Left ventricle myocardium inferior (tissue), 1 donor: ENCODE measurements at regions of chr16 and their contacts with region 1.

Region 1: DNA sequence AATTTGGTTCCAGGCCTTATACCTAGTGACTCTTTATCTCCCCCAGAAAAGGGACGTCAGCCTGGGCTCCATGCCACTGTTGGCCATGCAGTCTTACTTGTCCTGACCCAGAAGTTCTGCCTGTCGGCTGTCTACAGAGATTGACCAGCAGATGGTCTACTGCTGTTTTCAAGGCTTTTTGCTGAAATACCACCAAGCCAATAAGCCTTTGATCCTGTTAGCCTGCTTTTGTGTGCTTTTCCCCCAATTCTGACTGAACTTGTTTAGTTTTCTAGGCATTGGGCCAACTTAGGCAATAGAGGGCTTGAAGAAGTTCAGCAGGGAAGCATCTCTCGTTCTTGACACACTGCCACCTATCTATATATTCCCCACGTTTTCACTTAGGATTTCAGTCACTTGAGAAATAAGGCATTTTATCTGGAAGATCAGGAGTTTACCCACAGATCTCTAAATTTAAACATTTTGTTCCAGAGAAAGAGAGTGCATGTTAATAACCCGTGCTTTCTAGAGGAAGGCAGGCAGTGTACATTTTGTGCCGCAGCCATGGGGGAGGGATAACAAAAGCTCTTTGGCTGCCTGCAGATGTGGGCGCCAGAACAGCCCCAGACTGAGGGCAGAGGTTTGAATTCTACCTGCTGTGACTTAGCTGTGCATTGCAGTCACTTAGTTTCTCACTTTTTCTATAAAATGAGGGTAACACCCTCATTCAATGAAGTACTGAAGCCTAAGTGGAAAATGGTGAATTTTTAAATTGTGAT is 12.3 kb upstream of the CARMIL2 start:
- DNase-seq: peak; percentile 57
- H3K4me3 ChIP-seq: no peak overlapping the region
- H3K27ac ChIP-seq: peak overlapping the region; percentile 13
- H3K4me1 ChIP-seq: peaks cover 11% of the 10 kb centered on the region
- H3K27me3 ChIP-seq: no peaks in the 10 kb centered on the region
- CTCF ChIP-seq: no peak

Region 2: GRCh38 chr16:67571981-67572431 is 60.6 kb before region 1 on chr16:
- intact Hi-C with region 1: loop called (anchors 10 kb)
- DNase-seq: no peak
- H3K4me3 ChIP-seq: no peak overlapping the region
- H3K27ac ChIP-seq: no peak overlapping the region
- H3K4me1 ChIP-seq: peaks cover 7% of the 10 kb centered on the region
- H3K27me3 ChIP-seq: no peaks in the 10 kb centered on the region
- CTCF ChIP-seq: no peak